ENCODE measurements at regions of chr11 and their contacts with region 1.

Region 1: GRCh38 chr11:78645226-78646202 is 70.8 kb upstream of the NARS2 start:
- DNase-seq: peak; percentile 74
- H3K4me3 ChIP-seq: no peak overlapping the region
- H3K27ac ChIP-seq: peak overlapping the region; percentile 42
- H3K4me1 ChIP-seq: peaks cover 14% of the 10 kb centered on the region
- H3K27me3 ChIP-seq: no peaks in the 10 kb centered on the region
- CTCF ChIP-seq: peak; percentile 93 to 98

Region 2: GRCh38 chr11:78605296-78605695 is 40.2 kb before region 1 on chr11:
- CTCF ChIA-PET with region 1: no interaction called
- dilution Hi-C with region 1: no loop called
- in situ Hi-C with region 1: no loop called
- intact Hi-C with region 1: no loop called
- DNase-seq: peak; percentile 20
- H3K4me3 ChIP-seq: no peak overlapping the region
- H3K27ac ChIP-seq: no peak overlapping the region
- H3K4me1 ChIP-seq: peaks cover 3% of the 10 kb centered on the region
- H3K27me3 ChIP-seq: no peaks in the 10 kb centered on the region
- CTCF ChIP-seq: no peak

Region 3: GRCh38 chr11:78660471-78660870 is 15.0 kb after region 1 on chr11:
- CTCF ChIA-PET with region 1: interaction called, 10 read pairs
- dilution Hi-C with region 1: no loop called
- in situ Hi-C with region 1: no loop called
- intact Hi-C with region 1: no loop called
- DNase-seq: no peak
- H3K4me3 ChIP-seq: no peak overlapping the region
- H3K27ac ChIP-seq: no peak overlapping the region
- H3K4me1 ChIP-seq: peaks cover 7% of the 10 kb centered on the region
- H3K27me3 ChIP-seq: no peaks in the 10 kb centered on the region
- CTCF ChIP-seq: no peak

Region 4: GRCh38 chr11:78798660-78799059 is 153.1 kb after region 1 on chr11:
- CTCF ChIA-PET with region 1: interaction called, 3 read pairs
- dilution Hi-C with region 1: no loop called
- in situ Hi-C with region 1: no loop called
- intact Hi-C with region 1: loop called (anchors 2 kb)
- DNase-seq: peak; percentile 11
- H3K4me3 ChIP-seq: no peak overlapping the region
- H3K27ac ChIP-seq: no peak overlapping the region
- H3K4me1 ChIP-seq: peaks cover 19% of the 10 kb centered on the region
- H3K27me3 ChIP-seq: no peaks in the 10 kb centered on the region
- CTCF ChIP-seq: peak; percentile 81 to 83

Region 5: GRCh38 chr11:79052544-79052943 is 407.0 kb after region 1 on chr11:
- CTCF ChIA-PET with region 1: no interaction called
- dilution Hi-C with region 1: no loop called
- in situ Hi-C with region 1: no loop called
- intact Hi-C with region 1: loop called (anchors 5 kb)
- DNase-seq: no peak
- H3K4me3 ChIP-seq: no peak overlapping the region
- H3K27ac ChIP-seq: no peak overlapping the region
- H3K4me1 ChIP-seq: no peaks in the 10 kb centered on the region
- H3K27me3 ChIP-seq: no peaks in the 10 kb centered on the region
- CTCF ChIP-seq: peak in 1 of 2 donors; percentile 25

Region 6: GRCh38 chr11:79100093-79100910 is 454.8 kb after region 1 on chr11:
- CTCF ChIA-PET with region 1: interaction called, 43 read pairs
- dilution Hi-C with region 1: no loop called
- in situ Hi-C with region 1: no loop called
- intact Hi-C with region 1: loop called (anchors 1 kb)
- DNase-seq: peak; percentile 26
- H3K4me3 ChIP-seq: no peak overlapping the region
- H3K27ac ChIP-seq: no peak overlapping the region
- H3K4me1 ChIP-seq: no peaks in the 10 kb centered on the region
- H3K27me3 ChIP-seq: no peaks in the 10 kb centered on the region
- CTCF ChIP-seq: peak; percentile 74 to 87

Region 7: GRCh38 chr11:79263001-79263400 is 617.5 kb after region 1 on chr11:
- CTCF ChIA-PET with region 1: no interaction called
- dilution Hi-C with region 1: no loop called
- in situ Hi-C with region 1: no loop called
- intact Hi-C with region 1: loop called (anchors 5 kb)
- DNase-seq: no peak
- H3K4me3 ChIP-seq: no peak overlapping the region
- H3K27ac ChIP-seq: no peak overlapping the region
- H3K4me1 ChIP-seq: no peaks in the 10 kb centered on the region
- H3K27me3 ChIP-seq: no peaks in the 10 kb centered on the region
- CTCF ChIP-seq: no peak

Region 8: GRCh38 chr11:79708300-79708932 is 1062.9 kb after region 1 on chr11:
- CTCF ChIA-PET with region 1: no interaction called
- dilution Hi-C with region 1: no loop called
- in situ Hi-C with region 1: no loop called
- intact Hi-C with region 1: loop called (anchors 10 kb)
- DNase-seq: peak; percentile 49
- H3K4me3 ChIP-seq: no peak overlapping the region
- H3K27ac ChIP-seq: no peak overlapping the region
- H3K4me1 ChIP-seq: no peaks in the 10 kb centered on the region
- H3K27me3 ChIP-seq: no peaks in the 10 kb centered on the region
- CTCF ChIP-seq: peak; percentile 65 to 80